T-cell (primary cell): ENCODE measurements at regions of chr4 and their contacts with region 1.

Region 1: GRCh38 chr4:177796841-177797240 is 354.6 kb upstream of the AGA start:
- DNase-seq: no peak
- ATAC-seq: no peak
- H3K4me3 ChIP-seq: no peak overlapping the region
- H3K4me3 Mint-ChIP-seq: no peak overlapping the region
- H3K27ac ChIP-seq: no peak overlapping the region
- H3K27ac Mint-ChIP-seq: no peak overlapping the region
- H3K4me1 ChIP-seq: no peaks in the 10 kb centered on the region
- H3K4me1 Mint-ChIP-seq: no peaks in the 10 kb centered on the region
- H3K27me3 ChIP-seq: no peaks in the 10 kb centered on the region
- H3K27me3 Mint-ChIP-seq: peaks cover 0 to 15% of the 10 kb centered on the region in 2 donors

Region 2: DNA sequence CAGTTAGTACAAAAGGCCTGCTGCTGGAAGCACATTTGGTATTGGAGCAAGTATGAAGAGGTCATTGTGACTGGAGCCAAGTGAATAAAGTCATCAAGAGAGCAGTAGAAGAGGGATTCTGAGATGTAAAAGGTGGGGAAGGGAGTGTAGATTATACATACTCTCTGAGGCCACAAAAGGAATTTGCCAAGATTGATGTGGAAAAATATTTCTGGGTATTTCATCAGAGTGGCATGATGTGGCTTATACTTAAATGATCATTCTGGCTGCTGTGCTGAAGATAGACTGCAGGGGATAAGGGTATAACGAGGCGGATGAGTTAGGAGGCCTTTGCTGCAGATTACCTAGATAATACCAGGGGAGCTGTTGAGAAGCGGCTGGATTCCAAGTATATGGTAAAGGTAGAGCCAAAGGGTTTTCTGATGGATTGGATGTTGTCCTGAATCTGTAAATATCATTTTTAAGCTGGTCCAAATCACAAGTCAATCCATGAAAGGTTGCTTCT is 122.8 kb before region 1 on chr4:
- CTCF ChIA-PET with region 1: no interaction called
- POLR2A ChIA-PET with region 1: no interaction called
- DNase-seq: no peak
- ATAC-seq: no peak
- H3K4me3 ChIP-seq: no peak overlapping the region
- H3K4me3 Mint-ChIP-seq: no peak overlapping the region
- H3K27ac ChIP-seq: no peak overlapping the region
- H3K27ac Mint-ChIP-seq: no peak overlapping the region
- H3K4me1 ChIP-seq: no peaks in the 10 kb centered on the region
- H3K4me1 Mint-ChIP-seq: no peaks in the 10 kb centered on the region
- H3K27me3 ChIP-seq: no peaks in the 10 kb centered on the region
- H3K27me3 Mint-ChIP-seq: no peaks in the 10 kb centered on the region

Region 3: GRCh38 chr4:177809791-177810190 is 12.9 kb after region 1 on chr4:
- CTCF ChIA-PET with region 1: no interaction called
- POLR2A ChIA-PET with region 1: interaction called in 1 of 2 experiments, 14 read pairs
- DNase-seq: no peak
- ATAC-seq: no peak
- H3K4me3 ChIP-seq: no peak overlapping the region
- H3K4me3 Mint-ChIP-seq: no peak overlapping the region
- H3K27ac ChIP-seq: no peak overlapping the region
- H3K27ac Mint-ChIP-seq: no peak overlapping the region
- H3K4me1 ChIP-seq: no peaks in the 10 kb centered on the region
- H3K4me1 Mint-ChIP-seq: no peaks in the 10 kb centered on the region
- H3K27me3 ChIP-seq: no peaks in the 10 kb centered on the region
- H3K27me3 Mint-ChIP-seq: no peaks in the 10 kb centered on the region

Region 4: GRCh38 chr4:178010596-178010995 is 213.8 kb after region 1 on chr4:
- CTCF ChIA-PET with region 1: no interaction called
- POLR2A ChIA-PET with region 1: no interaction called
- DNase-seq: no peak
- ATAC-seq: no peak
- H3K4me3 ChIP-seq: no peak overlapping the region
- H3K4me3 Mint-ChIP-seq: no peak overlapping the region
- H3K27ac ChIP-seq: no peak overlapping the region
- H3K27ac Mint-ChIP-seq: no peak overlapping the region
- H3K4me1 ChIP-seq: no peaks in the 10 kb centered on the region
- H3K4me1 Mint-ChIP-seq: no peaks in the 10 kb centered on the region
- H3K27me3 ChIP-seq: no peaks in the 10 kb centered on the region
- H3K27me3 Mint-ChIP-seq: no peaks in the 10 kb centered on the region

Region 5: DNA sequence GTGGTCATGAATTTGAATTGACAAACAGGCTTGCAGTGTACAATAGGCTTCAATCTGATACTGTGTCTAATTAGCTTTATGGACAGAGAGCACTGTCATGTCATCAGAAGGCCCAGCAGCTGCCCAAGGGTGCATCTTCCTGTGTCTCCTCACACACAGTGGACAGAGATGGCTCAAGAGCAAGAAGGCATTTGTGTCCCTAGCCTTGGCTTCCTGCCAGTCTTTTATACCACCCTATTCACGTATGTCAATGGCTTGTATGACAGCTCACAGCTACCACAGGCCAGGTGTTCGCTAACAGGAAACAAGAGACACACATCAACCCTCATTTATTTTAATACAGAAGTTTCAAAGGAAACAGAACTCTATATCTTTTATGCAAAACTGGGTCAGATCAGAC is 519.4 kb after region 1 on chr4:
- CTCF ChIA-PET with region 1: no interaction called
- POLR2A ChIA-PET with region 1: no interaction called
- DNase-seq: no peak
- ATAC-seq: no peak
- H3K4me3 ChIP-seq: no peak overlapping the region
- H3K4me3 Mint-ChIP-seq: no peak overlapping the region
- H3K27ac ChIP-seq: no peak overlapping the region
- H3K27ac Mint-ChIP-seq: no peak overlapping the region
- H3K4me1 ChIP-seq: no peaks in the 10 kb centered on the region
- H3K4me1 Mint-ChIP-seq: no peaks in the 10 kb centered on the region
- H3K27me3 ChIP-seq: no peaks in the 10 kb centered on the region
- H3K27me3 Mint-ChIP-seq: no peaks in the 10 kb centered on the region